Kidney (tissue), 22 donors: ENCODE measurements at regions of chr1 and their contacts with region 1.

Region 1: GRCh38 chr1:25204797-25205480 is 27.4 kb downstream of the SYF2 start:
- DNase-seq: peak in 2 of 5 donors; percentile 51 to 74
- H3K4me3 ChIP-seq: no peak overlapping the region
- H3K27ac ChIP-seq: no peak overlapping the region
- H3K4me1 ChIP-seq: no peaks in the 10 kb centered on the region
- H3K27me3 ChIP-seq: no peaks in the 10 kb centered on the region
- CTCF ChIP-seq: peak; percentile 60

Region 2: DNA sequence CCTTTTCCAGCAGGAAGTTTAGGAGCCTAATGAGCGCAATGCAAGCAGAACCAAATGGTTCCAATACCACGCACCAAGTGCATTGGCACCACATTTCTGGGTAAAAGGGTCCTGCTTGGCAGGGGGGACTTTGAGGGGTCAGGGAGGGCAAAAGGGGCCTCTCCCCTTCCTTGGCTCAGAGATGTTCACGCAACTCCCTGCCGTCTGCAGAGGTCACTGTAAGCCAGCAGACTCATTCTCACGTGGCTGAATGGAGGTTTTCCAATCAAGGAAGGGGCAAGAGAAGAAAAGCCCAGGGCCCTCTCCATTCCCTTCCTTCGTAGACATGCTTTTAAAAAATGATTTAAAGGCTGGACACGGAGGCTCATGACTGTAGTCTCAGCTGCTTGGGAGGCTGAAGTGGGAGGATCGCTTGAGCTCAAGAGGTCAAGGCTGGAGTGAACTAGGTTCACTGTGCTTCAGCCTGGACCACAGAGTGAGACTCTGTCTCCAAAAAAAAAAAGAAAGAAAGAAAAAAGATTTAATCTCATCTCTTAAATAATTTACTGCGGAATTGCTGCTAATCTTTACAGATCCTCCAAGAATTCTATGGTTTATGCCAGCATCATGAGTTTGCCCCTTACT is 355.2 kb before region 1 on chr1:
- intact Hi-C with region 1: loop called (anchors 10 kb)
- DNase-seq: peak in 3 of 5 donors; percentile 39 to 76 (median 46)
- H3K4me3 ChIP-seq: no peak overlapping the region
- H3K27ac ChIP-seq: no peak overlapping the region
- H3K4me1 ChIP-seq: peaks cover 0 to 2% (median 0%) of the 10 kb centered on the region in 3 donors
- H3K27me3 ChIP-seq: no peaks in the 10 kb centered on the region
- CTCF ChIP-seq: peak; percentile 33